A549 (cell line): ENCODE measurements at regions of chr10 and their contacts with region 1.

Region 1: DNA sequence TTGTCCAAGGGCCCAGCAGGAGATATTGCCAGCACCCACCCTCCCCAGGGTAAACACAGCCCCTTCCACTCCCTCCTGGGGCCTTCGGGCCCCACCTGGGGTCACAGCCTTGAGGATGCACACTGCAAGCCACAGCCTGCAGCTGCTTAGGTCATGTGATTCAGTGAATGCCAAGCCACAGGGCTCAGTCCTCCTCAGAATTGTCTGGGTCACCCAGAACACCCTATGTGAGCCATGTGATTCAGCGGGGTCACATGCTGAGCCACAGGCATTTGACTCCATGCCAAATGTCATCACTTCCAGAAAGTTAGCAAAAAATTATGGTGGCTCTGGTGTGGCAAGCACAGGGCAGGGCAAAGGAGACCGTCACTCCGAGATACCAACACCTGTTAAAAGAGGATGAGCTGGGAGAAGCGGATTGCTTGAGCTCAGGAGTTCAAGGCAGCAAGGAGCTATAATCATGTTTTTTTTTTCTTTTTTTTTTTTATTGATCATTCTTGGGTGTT is 17.2 kb upstream of the PSAP start:
- DNase-seq: peak; percentile 57 to 80
- ATAC-seq: peak; percentile 57 to 88
- H3K4me3 ChIP-seq: no peak overlapping the region
- H3K27ac ChIP-seq: peak overlapping the region; percentile 91 to 93
- H3K4me1 ChIP-seq: peaks cover 67% of the 10 kb centered on the region
- CTCF ChIP-seq: no peak
- EP300 ChIP-seq: peak; percentile 65 to 77; a peak in 3 of 5 replicates
- POLR2A ChIP-seq: no peak
- RAD21 ChIP-seq: no peak; a peak in 1 of 5 replicates

Region 2: DNA sequence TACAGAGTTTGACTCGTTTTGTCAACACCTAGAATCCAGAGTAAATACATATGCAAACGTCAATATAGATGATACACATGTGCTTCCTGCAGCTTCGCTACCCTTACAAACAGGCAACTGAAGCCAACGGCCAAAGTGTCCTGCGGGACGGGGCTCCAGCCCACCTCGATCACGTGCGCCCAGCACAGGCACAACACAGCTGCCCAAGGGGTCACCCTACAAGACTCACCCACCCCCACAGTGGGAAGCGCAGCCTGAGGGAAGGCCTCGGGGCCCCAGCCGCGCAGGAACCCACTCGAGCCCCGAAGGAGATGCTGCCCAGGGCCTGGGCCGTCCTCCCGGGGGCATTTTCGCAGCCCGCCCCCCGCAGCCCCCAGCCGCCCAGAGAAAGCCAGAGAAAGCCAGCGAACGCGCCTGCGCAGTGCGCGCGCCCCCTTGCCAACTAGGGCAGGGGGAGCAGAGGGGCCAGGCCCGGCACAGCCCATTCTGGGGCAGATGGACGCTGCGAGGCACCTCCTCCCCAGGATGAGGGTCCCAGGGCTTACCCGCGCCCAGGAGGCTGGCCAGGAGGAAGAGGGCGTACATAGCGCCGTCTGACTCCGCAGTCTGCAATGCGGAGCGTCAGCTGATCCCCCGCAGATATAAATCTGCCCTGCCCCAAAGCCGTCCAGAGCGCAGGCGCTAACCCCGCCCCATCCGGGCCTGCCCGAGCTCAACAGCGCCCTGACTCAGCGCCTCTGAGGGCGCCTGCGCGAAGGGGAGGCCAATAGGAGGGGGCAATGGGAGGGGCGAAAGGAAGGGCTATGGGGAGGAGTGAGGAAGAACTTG is 17.4 kb before region 1 on chr10 and contains the start of gene PSAP:
- CTCF ChIA-PET with region 1: no interaction called
- POLR2A ChIA-PET with region 1: interaction called, 22 read pairs
- DNase-seq: peak; percentile 97
- ATAC-seq: peak; percentile 95 to 98
- H3K4me3 ChIP-seq: peak within 1 kb of the TSS; percentile 76
- H3K27ac ChIP-seq: peak within 1 kb of the TSS; percentile 92 to 97
- H3K4me1 ChIP-seq: peaks cover 34% of the 10 kb centered on the region
- CTCF ChIP-seq: no peak
- EP300 ChIP-seq: no peak
- POLR2A ChIP-seq: peak; percentile 96
- RAD21 ChIP-seq: no peak; a peak in 1 of 5 replicates
- polyA plus RNA-seq, gene PSAP: 1,519 and 1,660 TPM in 2 replicates

Region 3: DNA sequence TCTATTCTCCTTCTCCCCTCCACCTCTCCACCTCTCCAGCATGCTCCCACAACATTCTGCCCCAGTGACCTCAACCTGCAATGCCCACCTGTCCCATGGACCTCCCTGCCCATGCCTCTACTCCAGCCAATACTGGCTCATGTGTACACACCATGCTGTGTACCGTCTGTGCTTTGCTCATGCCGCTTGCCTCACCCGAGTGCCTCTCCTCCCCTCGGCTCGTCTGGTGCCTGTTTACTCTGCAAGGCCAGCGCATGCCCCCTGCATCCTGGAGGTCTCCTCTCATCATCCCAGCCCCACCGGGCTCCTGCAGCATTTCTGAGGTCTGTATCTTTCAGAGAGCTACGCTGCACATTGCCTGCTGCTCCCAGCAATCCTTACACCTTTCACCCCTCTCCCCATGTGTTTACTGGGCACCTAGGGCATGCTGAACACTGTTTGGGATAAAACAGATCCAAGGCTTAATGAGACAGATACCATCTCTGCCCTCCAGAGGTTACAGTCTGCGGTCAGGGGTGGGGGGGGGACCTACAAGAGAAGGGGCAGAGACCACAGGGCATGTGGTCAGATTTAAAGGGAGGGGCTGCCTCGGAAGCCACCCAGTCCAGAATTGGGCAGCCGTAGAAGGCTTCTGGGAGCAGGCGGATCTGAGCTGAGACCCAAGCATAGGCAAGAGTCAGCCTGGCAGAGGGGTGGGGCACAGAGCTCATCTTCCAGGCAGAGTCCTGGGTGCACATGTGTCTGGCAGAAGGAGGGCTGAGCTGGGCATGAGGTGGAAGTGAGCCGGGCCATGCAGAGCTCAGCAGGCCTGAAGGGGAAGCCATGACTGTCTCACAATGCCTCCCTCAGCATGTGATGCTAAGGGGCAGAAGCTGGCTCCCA is 12.4 kb after region 1 on chr10:
- CTCF ChIA-PET with region 1: interaction called, 12 read pairs
- POLR2A ChIA-PET with region 1: interaction called, 5 read pairs
- DNase-seq: peak in 1 of 2 experiments; percentile 28
- ATAC-seq: peak; percentile 68 to 73; a peak in 5 of 6 replicates
- H3K4me3 ChIP-seq: no peak overlapping the region
- H3K27ac ChIP-seq: peak overlapping the region; percentile 52 to 81
- H3K4me1 ChIP-seq: peaks cover 31% of the 10 kb centered on the region
- CTCF ChIP-seq: no peak
- EP300 ChIP-seq: no peak
- POLR2A ChIP-seq: no peak
- RAD21 ChIP-seq: no peak